Right ventricle myocardium superior (tissue), 1 donor: ENCODE measurements at regions of chr7 and their contacts with region 1.

Region 1: DNA sequence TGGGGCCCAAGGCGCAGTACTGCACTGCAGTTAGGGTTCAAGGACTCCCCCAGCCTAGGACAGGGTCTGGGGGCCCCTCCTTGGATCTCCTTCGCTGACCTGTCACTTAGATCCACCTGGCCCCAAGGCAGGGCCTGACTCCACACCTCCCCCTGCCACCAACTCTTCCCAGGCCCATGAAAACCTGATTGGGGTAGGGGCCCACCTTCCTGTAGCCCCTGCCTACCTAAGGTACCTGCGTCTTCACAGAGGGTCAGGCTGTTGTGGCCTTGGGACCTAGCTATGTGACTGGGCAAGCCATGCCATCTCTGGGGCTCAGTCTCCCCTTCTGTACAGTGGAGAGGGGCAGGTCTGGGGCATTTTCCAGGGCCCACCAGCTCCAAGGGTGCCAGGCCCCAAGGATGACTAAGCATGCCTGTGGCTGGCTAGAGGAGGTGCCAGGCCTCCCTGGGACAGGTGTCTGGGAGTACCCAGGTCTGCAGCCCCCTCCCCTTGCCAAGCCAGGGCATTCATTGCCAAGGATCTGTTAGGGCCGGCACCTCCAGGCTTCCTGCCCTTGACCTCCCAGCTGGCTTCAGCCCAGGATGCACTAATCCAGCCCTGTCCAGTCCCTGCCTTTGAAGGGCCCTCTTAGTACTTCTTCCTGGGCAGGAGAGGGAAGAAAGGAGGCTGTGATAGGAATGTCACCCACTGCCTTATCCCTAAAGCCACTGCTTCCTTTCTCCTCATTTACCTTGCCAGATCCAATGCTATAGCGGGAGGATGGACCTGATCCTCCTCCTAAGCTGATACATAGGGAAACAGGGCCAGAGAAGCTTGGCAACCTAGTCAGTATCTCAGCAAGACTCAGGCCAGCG is 1.3 kb downstream of the LIMK1 start:
- DNase-seq: no peak
- ATAC-seq: no peak

Region 2: DNA sequence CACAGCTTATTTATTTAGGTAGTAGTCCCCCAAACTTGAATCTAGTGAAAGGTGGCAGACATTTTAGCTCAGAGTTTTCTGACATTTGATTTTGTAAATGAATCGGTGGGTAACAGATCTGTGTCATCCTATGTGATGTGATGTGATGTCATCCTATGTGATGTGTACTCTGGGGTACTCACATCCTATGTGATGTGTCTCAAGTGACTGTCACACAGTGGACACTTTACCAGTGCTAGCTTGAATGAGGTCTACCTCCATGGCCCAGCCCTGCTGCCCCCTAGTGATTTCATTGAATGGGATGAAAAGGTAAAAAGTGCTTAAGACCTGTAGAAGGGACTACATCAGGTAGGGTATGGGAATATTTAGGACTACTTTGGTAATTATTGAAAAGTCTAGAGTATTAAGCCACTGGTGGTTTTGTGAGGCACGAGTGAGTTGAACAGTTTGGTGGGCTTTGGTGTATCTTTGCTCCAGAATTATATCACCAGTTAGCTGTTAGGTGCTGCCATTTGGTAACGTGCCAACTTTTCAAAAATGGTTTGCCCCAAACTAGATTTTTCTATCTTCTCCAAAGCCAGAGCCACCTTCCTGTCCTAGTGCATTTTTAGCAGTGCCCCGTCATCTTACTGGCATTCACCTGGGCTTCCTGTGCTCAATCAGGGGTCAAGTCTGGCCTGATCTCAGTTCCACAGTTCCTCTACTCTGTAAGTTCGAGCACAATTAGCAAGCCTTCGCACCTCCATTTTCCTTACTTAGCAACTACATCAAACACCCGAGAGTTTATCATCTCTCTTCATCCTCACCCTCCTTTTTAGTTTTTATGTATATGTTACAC is 98.9 kb after region 1 on chr7:
- intact Hi-C with region 1: loop called (anchors 5 kb)
- DNase-seq: no peak
- ATAC-seq: no peak